ENCODE measurements at regions of chr19 and their contacts with region 1.

Region 1: GRCh38 chr19:42219812-42220750 is at the start of gene ZNF526:
- DNase-seq: peak; percentile 92 to 97
- H3K4me3 ChIP-seq: peak within 1 kb of the TSS; percentile 84
- H3K27ac ChIP-seq: peak within 1 kb of the TSS; percentile 27
- H3K4me1 ChIP-seq: peaks cover 35% of the 10 kb centered on the region
- H3K27me3 ChIP-seq: no peaks in the 10 kb centered on the region
- CTCF ChIP-seq: no peak
- total RNA-seq, gene ZNF526: 13.4 and 13.9 TPM in 2 replicates

Region 2: GRCh38 chr19:41978470-41978869 is 241.6 kb before region 1 on chr19:
- CTCF ChIA-PET with region 1: no interaction called
- POLR2A ChIA-PET with region 1: no interaction called
- intact Hi-C with region 1: no loop called
- DNase-seq: no peak
- H3K4me3 ChIP-seq: no peak overlapping the region
- H3K27ac ChIP-seq: no peak overlapping the region
- H3K4me1 ChIP-seq: no peaks in the 10 kb centered on the region
- H3K27me3 ChIP-seq: peaks cover 46% of the 10 kb centered on the region
- CTCF ChIP-seq: no peak

Region 3: DNA sequence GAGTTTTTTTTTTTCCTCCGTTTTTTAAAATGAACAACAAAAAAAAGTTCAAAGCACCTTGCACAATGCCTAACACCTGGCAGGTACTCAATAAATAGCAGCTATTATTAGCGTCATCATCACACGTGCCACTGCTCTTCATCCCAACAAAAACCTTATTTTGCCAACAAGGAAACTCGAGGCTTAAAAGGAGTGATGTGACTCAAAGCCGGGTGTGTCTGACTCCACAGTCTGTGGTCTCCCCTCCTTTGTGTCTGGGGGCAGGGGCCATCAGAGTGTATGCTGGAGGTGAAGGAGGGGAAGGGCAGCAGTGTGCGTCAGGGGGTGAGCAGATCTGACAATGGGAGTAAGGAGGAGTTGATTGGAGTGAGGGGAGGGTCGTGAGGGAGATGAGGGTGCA is 53.8 kb before region 1 on chr19:
- CTCF ChIA-PET with region 1: no interaction called
- POLR2A ChIA-PET with region 1: no interaction called
- intact Hi-C with region 1: loop called (anchors 2 kb)
- DNase-seq: peak; percentile 51 to 85
- H3K4me3 ChIP-seq: no peak overlapping the region
- H3K27ac ChIP-seq: peak overlapping the region; percentile 61
- H3K4me1 ChIP-seq: peaks cover 32% of the 10 kb centered on the region
- H3K27me3 ChIP-seq: no peaks in the 10 kb centered on the region
- CTCF ChIP-seq: no peak

Region 4: GRCh38 chr19:42207767-42208271 is 12.3 kb before region 1 on chr19:
- CTCF ChIA-PET with region 1: interaction called, 3 read pairs
- POLR2A ChIA-PET with region 1: interaction called, 3 read pairs
- intact Hi-C with region 1: loop called (anchors 1 kb)
- DNase-seq: peak; percentile 81 to 85
- H3K4me3 ChIP-seq: peak overlapping the region; percentile 31; the same call in 1 of the 2 replicates
- H3K27ac ChIP-seq: peak overlapping the region; percentile 93
- H3K4me1 ChIP-seq: peaks cover 48% of the 10 kb centered on the region
- H3K27me3 ChIP-seq: no peaks in the 10 kb centered on the region
- CTCF ChIP-seq: no peak

Region 5: GRCh38 chr19:42283143-42284065 is 63.3 kb after region 1 on chr19:
- CTCF ChIA-PET with region 1: no interaction called
- POLR2A ChIA-PET with region 1: no interaction called
- intact Hi-C with region 1: loop called (anchors 5 kb)
- DNase-seq: peak; percentile 71 to 94
- H3K4me3 ChIP-seq: peak overlapping the region; percentile 66
- H3K27ac ChIP-seq: no peak overlapping the region
- H3K4me1 ChIP-seq: peaks cover 42% of the 10 kb centered on the region
- H3K27me3 ChIP-seq: no peaks in the 10 kb centered on the region
- CTCF ChIP-seq: no peak

Measured in PC-9 (cell line).